B cell (primary cell): ENCODE measurements at regions of chr6 and their contacts with region 1.

Region 1: DNA sequence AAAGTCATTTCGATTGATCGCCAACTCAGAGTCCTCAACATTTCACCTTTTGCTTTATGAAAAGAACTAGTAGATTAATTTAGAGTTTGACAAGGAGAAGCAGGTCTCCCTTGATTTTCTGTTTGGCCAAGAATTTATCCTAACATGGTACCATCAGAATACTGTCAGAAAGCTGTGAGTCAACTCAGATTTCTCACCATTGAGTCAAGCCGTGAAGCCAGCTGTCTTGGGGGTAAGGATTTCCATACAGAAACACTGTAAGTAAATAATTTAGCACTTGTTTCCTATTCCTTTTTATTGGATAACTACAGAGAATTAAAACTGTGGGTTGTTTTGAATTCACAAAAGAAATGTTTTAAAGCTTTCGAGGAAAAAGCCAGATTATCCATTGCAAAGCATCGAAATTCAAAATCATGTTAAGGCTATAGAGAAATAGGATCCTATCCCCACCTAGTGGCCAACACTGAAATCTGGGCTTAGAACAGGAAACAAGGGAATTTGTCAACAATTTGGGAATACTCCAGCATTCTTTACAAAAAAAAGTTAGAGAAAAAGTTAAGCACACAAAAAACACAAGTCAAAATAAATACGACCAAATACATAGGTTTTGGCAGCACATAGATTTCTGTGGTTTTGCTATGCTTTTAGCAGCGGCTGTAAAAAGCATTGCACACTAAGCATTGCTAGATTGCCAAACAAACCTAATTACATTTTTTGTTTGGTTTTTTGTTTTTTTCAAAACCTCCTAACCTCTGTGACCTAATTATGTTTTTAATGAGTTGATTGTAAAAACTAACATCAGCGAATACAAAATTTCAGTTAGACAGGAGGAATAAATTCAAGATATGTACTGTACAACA is 44.2 kb downstream of the COL11A2 start:
- DNase-seq: peak; percentile 60
- ATAC-seq: peak; percentile 59
- H3K4me3 ChIP-seq: no peak overlapping the region
- H3K4me3 Mint-ChIP-seq: no peak overlapping the region
- H3K27ac ChIP-seq: no peak overlapping the region
- H3K27ac Mint-ChIP-seq: no peak overlapping the region
- H3K4me1 ChIP-seq: peaks cover 7 to 14% of the 10 kb centered on the region in 2 donors
- H3K4me1 Mint-ChIP-seq: peaks cover 11% of the 10 kb centered on the region
- H3K27me3 ChIP-seq: peaks cover 0 to 7% (median under 1%) of the 10 kb centered on the region in 4 experiments
- H3K27me3 Mint-ChIP-seq: peaks cover 4% of the 10 kb centered on the region
- CTCF ChIP-seq: peak; percentile 80

Region 2: DNA sequence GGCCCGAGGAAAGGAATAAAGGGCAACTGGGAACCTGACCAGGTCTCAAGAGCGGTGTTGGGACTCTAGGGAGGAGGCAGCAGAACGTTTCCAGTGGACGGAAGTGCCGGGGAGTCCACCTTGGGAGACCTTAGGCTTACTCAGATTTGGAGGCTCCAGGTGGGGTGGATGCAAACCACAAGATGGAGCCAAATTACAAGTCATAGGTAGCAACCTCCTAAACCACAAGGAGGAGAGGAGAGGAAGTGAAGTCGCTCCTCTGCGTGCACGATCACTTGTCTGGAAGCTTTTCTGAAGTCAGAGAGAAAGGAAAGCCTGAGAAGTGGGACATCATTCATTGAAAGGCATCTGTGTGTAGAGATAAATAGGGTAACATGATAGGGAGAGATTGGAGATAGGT is 148.0 kb before region 1 on chr6:
- CTCF ChIA-PET with region 1: interaction called, 122 read pairs
- POLR2A ChIA-PET with region 1: interaction called, 3 read pairs
- intact Hi-C with region 1: loop called (anchors 1 kb)
- DNase-seq: peak; percentile 79
- ATAC-seq: peak; percentile 94
- H3K4me3 ChIP-seq: no peak overlapping the region
- H3K4me3 Mint-ChIP-seq: peak overlapping the region; percentile 11
- H3K27ac ChIP-seq: peak overlapping the region in 1 of 2 donors; percentile 31
- H3K27ac Mint-ChIP-seq: peak overlapping the region; percentile 53
- H3K4me1 ChIP-seq: peaks cover 10 to 13% of the 10 kb centered on the region in 2 donors
- H3K4me1 Mint-ChIP-seq: peaks cover 21% of the 10 kb centered on the region
- H3K27me3 ChIP-seq: no peaks in the 10 kb centered on the region
- H3K27me3 Mint-ChIP-seq: no peaks in the 10 kb centered on the region
- CTCF ChIP-seq: peak; percentile 70

Region 3: GRCh38 chr6:33082702-33083101 is 65.3 kb before region 1 on chr6:
- CTCF ChIA-PET with region 1: interaction called, 8 read pairs
- POLR2A ChIA-PET with region 1: no interaction called
- intact Hi-C with region 1: loop called (anchors 1 kb)
- DNase-seq: peak; percentile 65
- ATAC-seq: peak; percentile 63
- H3K4me3 ChIP-seq: peak overlapping the region in 1 of 5 experiments; percentile 7
- H3K4me3 Mint-ChIP-seq: peak overlapping the region; percentile 78
- H3K27ac ChIP-seq: peak overlapping the region; percentile 27 to 82
- H3K27ac Mint-ChIP-seq: peak overlapping the region; percentile 89
- H3K4me1 ChIP-seq: peaks cover 59 to 60% of the 10 kb centered on the region in 2 donors
- H3K4me1 Mint-ChIP-seq: peaks cover 72% of the 10 kb centered on the region
- H3K27me3 ChIP-seq: no peaks in the 10 kb centered on the region
- H3K27me3 Mint-ChIP-seq: no peaks in the 10 kb centered on the region
- CTCF ChIP-seq: peak; percentile 68

Region 4: DNA sequence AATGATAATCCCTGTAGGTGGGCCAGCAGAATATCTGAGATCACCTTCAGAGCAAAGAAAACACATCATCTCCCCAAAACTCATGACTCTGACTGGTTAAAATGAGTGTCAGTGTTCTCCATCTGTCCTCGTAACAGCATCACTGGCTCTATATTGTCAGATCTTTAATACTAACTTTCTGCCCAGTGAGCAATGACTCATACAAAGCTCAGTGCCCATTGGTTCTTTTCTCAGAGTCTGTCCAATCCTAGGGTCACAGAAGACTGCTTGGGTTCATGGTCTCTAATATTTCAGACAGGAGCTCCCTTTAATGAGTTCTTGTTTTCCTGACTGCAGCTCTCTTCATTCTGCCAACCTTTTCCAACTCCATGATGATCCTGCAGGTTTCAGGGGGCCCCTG is 35.9 kb before region 1 on chr6:
- CTCF ChIA-PET with region 1: interaction called, 49 read pairs
- POLR2A ChIA-PET with region 1: interaction called, 3 read pairs
- intact Hi-C with region 1: loop called (anchors 5 kb)
- DNase-seq: peak; percentile 87
- ATAC-seq: peak; percentile 95
- H3K4me3 ChIP-seq: peak overlapping the region in 4 of 5 experiments; percentile 36 to 60 (median 47)
- H3K4me3 Mint-ChIP-seq: peak overlapping the region; percentile 71
- H3K27ac ChIP-seq: peak overlapping the region; percentile 80 to 88
- H3K27ac Mint-ChIP-seq: peak overlapping the region; percentile 87
- H3K4me1 ChIP-seq: peaks cover 50 to 54% of the 10 kb centered on the region in 2 donors
- H3K4me1 Mint-ChIP-seq: peaks cover 54% of the 10 kb centered on the region
- H3K27me3 ChIP-seq: no peaks in the 10 kb centered on the region
- H3K27me3 Mint-ChIP-seq: no peaks in the 10 kb centered on the region
- CTCF ChIP-seq: no peak

Region 5: GRCh38 chr6:33118525-33119123 is 29.4 kb before region 1 on chr6:
- CTCF ChIA-PET with region 1: interaction called, 49 read pairs
- POLR2A ChIA-PET with region 1: interaction called, 3 read pairs
- intact Hi-C with region 1: loop called (anchors 5 kb)
- DNase-seq: peak; percentile 82
- ATAC-seq: peak; percentile 48
- H3K4me3 ChIP-seq: no peak overlapping the region
- H3K4me3 Mint-ChIP-seq: peak overlapping the region; percentile 47
- H3K27ac ChIP-seq: no peak overlapping the region
- H3K27ac Mint-ChIP-seq: no peak overlapping the region
- H3K4me1 ChIP-seq: peaks cover 43 to 47% of the 10 kb centered on the region in 2 donors
- H3K4me1 Mint-ChIP-seq: peaks cover 46% of the 10 kb centered on the region
- H3K27me3 ChIP-seq: no peaks in the 10 kb centered on the region
- H3K27me3 Mint-ChIP-seq: peaks cover 3% of the 10 kb centered on the region
- CTCF ChIP-seq: peak; percentile 92

Region 6: DNA sequence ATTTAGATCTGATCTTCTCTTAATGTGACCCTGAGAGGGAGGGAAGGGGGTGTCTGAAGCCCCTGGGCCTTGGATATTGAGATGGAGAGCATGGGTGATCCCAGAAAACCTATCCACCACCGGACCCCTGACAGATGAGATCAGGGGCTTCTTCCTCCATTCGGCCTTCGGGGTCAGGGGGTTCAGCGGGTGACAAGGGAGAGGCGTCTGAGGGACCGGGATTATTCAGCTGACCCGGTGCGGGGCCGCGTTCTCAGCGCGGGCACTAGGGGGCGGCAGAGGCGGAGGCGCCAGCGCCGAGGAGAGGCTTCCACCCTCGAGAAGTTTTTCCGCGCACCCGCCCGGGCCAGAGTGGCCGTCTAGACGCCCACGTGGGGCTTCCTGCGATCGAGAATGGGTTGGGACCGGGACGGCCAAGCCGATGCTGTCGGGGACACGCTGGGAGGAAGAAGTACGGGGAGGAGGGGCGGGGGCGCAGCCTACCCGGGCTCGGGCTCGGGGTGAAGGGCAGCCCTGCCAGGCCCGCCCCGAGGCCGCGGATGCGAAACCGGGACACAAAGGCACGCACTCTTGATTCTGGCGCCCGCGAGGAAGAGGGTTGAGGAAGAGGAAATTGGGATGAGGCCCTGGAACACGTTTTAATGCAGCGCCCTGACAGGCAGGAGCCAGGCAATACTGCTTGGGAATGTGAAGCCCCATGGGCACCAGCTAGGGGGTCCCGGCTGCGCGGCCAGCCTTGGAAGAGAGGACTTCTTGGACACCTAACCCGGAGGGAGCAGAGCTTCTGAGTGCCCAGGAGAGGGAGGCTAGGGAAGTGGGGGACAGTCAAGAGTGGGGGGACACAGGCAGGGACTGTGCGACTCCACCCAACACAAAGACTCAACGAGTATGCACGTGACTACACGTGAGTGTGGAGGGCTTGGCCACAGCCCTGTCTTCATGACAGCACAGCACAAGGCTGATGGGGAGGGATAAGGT is 13.6 kb after region 1 on chr6:
- CTCF ChIA-PET with region 1: interaction called, 13 read pairs
- POLR2A ChIA-PET with region 1: no interaction called
- intact Hi-C with region 1: no loop called
- DNase-seq: peak; percentile 87
- ATAC-seq: peak; percentile 97
- H3K4me3 ChIP-seq: peak overlapping the region in 4 of 5 experiments; percentile 52 to 68 (median 62)
- H3K4me3 Mint-ChIP-seq: peak overlapping the region; percentile 95
- H3K27ac ChIP-seq: peak overlapping the region in 1 of 2 donors; percentile 29
- H3K27ac Mint-ChIP-seq: peak overlapping the region; percentile 78
- H3K4me1 ChIP-seq: peaks cover 7 to 18% of the 10 kb centered on the region in 2 donors
- H3K4me1 Mint-ChIP-seq: peaks cover 17% of the 10 kb centered on the region
- H3K27me3 ChIP-seq: peaks cover 0 to 3% (median 0%) of the 10 kb centered on the region in 4 experiments
- H3K27me3 Mint-ChIP-seq: peaks cover 16% of the 10 kb centered on the region
- CTCF ChIP-seq: peak; percentile 93